ENCODE measurements at regions of chr2 and their contacts with region 1.

Region 1: DNA sequence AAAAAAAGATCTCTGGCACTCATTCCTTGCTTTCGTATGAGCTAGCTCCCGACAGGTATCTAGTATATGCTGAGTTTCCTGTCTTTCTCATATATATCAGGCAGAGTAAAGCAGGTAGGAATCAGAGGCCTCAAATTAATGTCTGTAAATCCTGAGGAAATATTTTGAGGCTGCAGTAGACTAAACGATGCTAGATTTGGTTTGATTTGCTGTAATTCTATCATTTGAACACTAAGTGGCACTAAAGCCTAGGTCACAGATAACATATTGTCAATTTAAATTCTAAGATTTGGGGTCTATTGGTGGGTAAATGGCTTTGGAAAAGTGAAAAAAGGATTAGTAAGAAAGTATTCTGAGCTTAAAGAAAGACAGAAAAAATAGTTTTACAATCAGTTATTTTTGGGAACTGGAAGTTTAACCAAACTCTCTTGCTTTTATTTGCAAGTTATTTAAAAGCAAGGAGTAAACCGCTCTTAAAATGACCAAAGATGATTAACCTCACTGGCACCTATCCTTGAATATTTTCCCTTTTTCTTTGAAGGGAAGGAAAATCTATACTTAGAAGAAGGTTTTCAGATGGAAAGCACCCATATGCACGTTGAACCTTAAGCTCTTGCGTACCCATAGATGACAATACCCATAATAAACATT is 37.6 kb upstream of the SLC4A10 start:
- DNase-seq: no peak
- H3K4me3 ChIP-seq: no peak overlapping the region
- H3K27ac ChIP-seq: no peak overlapping the region
- H3K27me3 ChIP-seq: no peaks in the 10 kb centered on the region
- CTCF ChIP-seq: peak; percentile 69

Region 2: GRCh38 chr2:161938339-161938738 is 351.7 kb after region 1 on chr2:
- CTCF ChIA-PET with region 1: interaction called, 17 read pairs
- POLR2A ChIA-PET with region 1: no interaction called
- DNase-seq: no peak
- H3K4me3 ChIP-seq: no peak overlapping the region
- H3K27ac ChIP-seq: no peak overlapping the region
- H3K27me3 ChIP-seq: peaks cover 2% of the 10 kb centered on the region
- CTCF ChIP-seq: no peak

Region 3: DNA sequence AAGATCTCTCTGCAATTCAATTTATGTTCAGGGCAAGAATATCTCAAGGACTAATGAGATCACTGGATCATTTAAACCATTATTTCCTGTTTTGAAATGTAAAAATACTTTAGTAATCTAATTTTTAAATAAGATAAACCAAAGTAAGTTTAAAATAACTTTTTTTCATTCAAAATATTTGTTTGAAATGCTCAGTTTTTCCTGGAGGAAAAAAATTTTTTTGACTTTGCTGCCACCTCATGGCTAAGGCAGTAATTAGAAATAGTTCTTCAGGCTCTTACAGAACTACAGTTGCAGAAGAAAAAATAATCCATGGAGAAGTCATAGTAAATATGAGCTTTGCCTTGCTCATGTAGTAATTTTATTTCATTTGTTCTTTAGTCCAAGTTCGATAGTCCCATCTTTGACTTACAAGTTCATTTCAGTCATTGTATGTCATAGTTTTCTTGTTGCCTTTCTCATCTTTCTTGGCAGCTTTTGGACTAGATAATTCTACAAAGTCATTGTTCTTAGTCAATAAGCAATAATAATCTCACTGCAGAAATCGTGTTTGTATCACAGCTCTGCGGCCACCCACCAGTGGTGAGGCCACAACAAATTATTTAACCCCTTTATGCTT is 360.0 kb after region 1 on chr2:
- CTCF ChIA-PET with region 1: interaction called, 91 read pairs
- POLR2A ChIA-PET with region 1: no interaction called
- DNase-seq: no peak
- H3K4me3 ChIP-seq: no peak overlapping the region
- H3K27ac ChIP-seq: no peak overlapping the region
- H3K27me3 ChIP-seq: no peaks in the 10 kb centered on the region
- CTCF ChIP-seq: peak; percentile 61

Region 4: GRCh38 chr2:162123806-162124758 is 537.4 kb after region 1 on chr2:
- CTCF ChIA-PET with region 1: interaction called, 46 read pairs
- POLR2A ChIA-PET with region 1: no interaction called
- DNase-seq: no peak
- H3K4me3 ChIP-seq: no peak overlapping the region
- H3K27ac ChIP-seq: no peak overlapping the region
- H3K27me3 ChIP-seq: no peaks in the 10 kb centered on the region
- CTCF ChIP-seq: peak; percentile 60

Region 5: GRCh38 chr2:162153608-162154224 is 567.1 kb after region 1 on chr2:
- CTCF ChIA-PET with region 1: interaction called, 12 read pairs
- POLR2A ChIA-PET with region 1: no interaction called
- DNase-seq: no peak
- H3K4me3 ChIP-seq: no peak overlapping the region
- H3K27ac ChIP-seq: no peak overlapping the region
- H3K27me3 ChIP-seq: no peaks in the 10 kb centered on the region
- CTCF ChIP-seq: peak; percentile 71

Region 6: GRCh38 chr2:162318328-162319180 is 731.9 kb after region 1 on chr2 and contains the start of gene IFIH1:
- CTCF ChIA-PET with region 1: interaction called, 10 read pairs
- POLR2A ChIA-PET with region 1: no interaction called
- DNase-seq: peak; percentile 68
- H3K4me3 ChIP-seq: peak within 1 kb of the TSS; percentile 74
- H3K27ac ChIP-seq: no peak within 1 kb of the TSS
- H3K27me3 ChIP-seq: no peaks in the 10 kb centered on the region
- CTCF ChIP-seq: peak; percentile 57
- polyA plus RNA-seq, gene IFIH1: 2.0 and 2.2 TPM in 2 replicates

Region 7: DNA sequence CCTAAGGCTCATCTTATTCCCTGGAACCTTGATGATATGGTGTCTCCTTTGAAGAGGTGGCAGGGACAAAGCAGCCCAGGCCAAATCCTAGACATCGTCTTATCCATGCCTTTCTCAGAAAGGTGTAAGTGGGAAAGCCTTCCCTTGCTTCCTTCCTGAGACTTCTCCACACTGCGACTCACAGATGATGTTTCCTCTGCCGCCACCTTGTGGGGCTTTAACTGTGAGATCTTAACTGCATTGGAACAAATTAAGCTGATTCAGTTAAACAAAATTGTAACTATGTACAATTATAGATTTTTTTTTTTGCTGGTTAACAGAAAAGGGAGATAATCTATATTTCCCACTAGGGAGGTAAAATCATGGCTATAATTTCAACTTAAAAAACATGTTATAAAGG is 747.3 kb after region 1 on chr2:
- CTCF ChIA-PET with region 1: interaction called, 32 read pairs
- POLR2A ChIA-PET with region 1: no interaction called
- DNase-seq: no peak
- H3K4me3 ChIP-seq: no peak overlapping the region
- H3K27ac ChIP-seq: no peak overlapping the region
- H3K27me3 ChIP-seq: no peaks in the 10 kb centered on the region
- CTCF ChIP-seq: peak; percentile 64